ENCODE measurements at regions of chr9 and their contacts with region 1.

Region 1: GRCh38 chr9:22008736-22009562 is at the start of gene CDKN2B:
- DNase-seq: peak; percentile 42 to 94 (median 88)
- H3K4me3 ChIP-seq: peak within 1 kb of the TSS; percentile 50 to 86 (median 70)
- H3K27ac ChIP-seq: peak within 1 kb of the TSS in 57 of 59 donors; percentile 18 to 93 (median 80)
- H3K27me3 ChIP-seq: peaks cover 0 to 75% (median 58%) of the 10 kb centered on the region in 45 donors
- CTCF ChIP-seq: peak; percentile 48 to 89 (median 75)
- total RNA-seq, gene CDKN2B: 1.4 to 10.3 (median 2.9) TPM

Region 2: GRCh38 chr9:21958833-21959232 is 50.1 kb before region 1 on chr9:
- intact Hi-C with region 1: no loop called
- DNase-seq: no peak
- H3K4me3 ChIP-seq: no peak overlapping the region
- H3K27ac ChIP-seq: no peak overlapping the region
- H3K27me3 ChIP-seq: peaks cover 0 to 33% (median 14%) of the 10 kb centered on the region in 45 donors
- CTCF ChIP-seq: no peak

Region 3: GRCh38 chr9:21995177-21996086 is 13.5 kb before region 1 on chr9:
- intact Hi-C with region 1: loop called in 1 of 2 experiments (anchors 1 kb)
- DNase-seq: peak in 6 of 10 donors; percentile 30 to 67 (median 42)
- H3K4me3 ChIP-seq: peak overlapping the region; percentile 36 to 93 (median 78)
- H3K27ac ChIP-seq: peak overlapping the region in 57 of 59 donors; percentile 24 to 94 (median 81)
- H3K27me3 ChIP-seq: peaks cover 0 to 62% (median 39%) of the 10 kb centered on the region in 45 donors
- CTCF ChIP-seq: peak in 37 of 56 donors; percentile 0 to 53 (median 34)

Region 4: GRCh38 chr9:22119537-22120158 is 110.7 kb after region 1 on chr9:
- intact Hi-C with region 1: loop called in 1 of 2 experiments (anchors 10 kb)
- DNase-seq: no peak
- H3K4me3 ChIP-seq: no peak overlapping the region
- H3K27ac ChIP-seq: no peak overlapping the region
- H3K27me3 ChIP-seq: no peaks in the 10 kb centered on the region
- CTCF ChIP-seq: peak in 34 of 56 donors; percentile 15 to 58 (median 33)

Measured in dorsolateral prefrontal cortex (tissue), 120 donors.